Pancreas (tissue), 10 donors: ENCODE measurements at regions of chr6 and their contacts with region 1.

Region 1: DNA sequence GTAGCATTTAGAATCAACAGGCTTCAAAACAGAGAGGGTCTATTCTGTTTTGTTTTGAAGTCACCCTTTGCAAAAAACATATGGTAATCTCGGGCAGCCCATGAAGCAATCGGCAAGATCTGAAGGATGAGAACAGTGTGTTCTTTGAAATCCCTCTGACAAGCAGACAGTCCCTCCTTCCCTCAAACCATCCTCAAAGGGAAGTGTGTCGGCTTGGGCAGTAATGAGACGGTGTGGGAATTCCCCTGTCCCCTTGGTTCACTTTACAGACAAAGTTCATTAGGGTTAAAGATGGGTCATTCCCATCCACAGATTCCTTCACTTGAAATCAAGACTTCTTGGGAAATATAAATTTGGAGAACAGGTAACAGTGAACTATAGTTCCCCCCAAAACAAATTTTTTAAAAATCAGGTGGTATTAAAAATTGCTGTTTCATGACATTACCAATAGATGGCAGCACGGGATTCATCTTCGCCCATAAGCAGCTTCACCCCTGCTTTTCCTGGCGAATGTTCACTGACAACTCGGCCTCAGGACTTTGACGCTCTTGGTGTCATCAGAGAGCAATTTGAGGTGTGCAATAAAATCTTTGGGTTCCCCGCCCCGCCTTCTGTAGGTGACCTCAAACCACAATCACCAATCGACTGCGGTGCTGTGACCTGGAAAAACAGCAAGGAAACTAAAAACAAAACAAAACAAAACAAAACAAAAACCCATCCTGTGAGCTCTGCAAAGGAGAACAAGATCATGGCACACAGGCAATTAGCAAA is 159.3 kb upstream of the TNFAIP3 start:
- DNase-seq: peak in 3 of 6 donors; percentile 37 to 66 (median 38)
- ATAC-seq: peak in 3 of 4 donors; percentile 77 to 84 (median 83)
- H3K4me3 ChIP-seq: peak overlapping the region in 1 of 4 donors; percentile 13
- H3K27ac ChIP-seq: peak overlapping the region in 1 of 4 donors; percentile 13
- H3K4me1 ChIP-seq: peaks cover 0 to 5% (median 0%) of the 10 kb centered on the region in 3 donors
- H3K27me3 ChIP-seq: no peaks in the 10 kb centered on the region
- CTCF ChIP-seq: peak; percentile 24 to 64 (median 61)

Region 2: DNA sequence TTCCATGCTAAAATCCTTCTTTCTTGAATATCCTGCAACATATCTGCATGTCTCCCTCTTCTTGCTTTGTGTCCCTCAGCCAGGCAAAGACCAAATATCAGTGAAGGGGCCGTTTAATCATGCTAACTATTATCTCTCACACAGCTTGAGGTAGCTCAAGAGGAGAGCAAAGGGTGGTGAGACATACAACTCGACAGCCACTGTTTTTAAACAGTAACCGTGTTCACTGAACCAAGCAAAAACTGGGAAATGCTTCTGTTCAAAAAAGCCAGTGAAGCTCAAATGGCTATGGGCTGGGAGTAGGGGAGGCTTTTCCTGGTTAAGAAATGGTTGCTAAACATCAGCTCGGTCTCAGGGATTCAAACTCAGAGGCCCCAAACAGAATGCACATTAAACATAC is 1241.0 kb before region 1 on chr6:
- intact Hi-C with region 1: no loop called
- DNase-seq: no peak
- ATAC-seq: peak in 2 of 4 donors; percentile 48 to 60
- H3K4me3 ChIP-seq: no peak overlapping the region
- H3K27ac ChIP-seq: no peak overlapping the region
- H3K4me1 ChIP-seq: peaks cover 2 to 11% (median 10%) of the 10 kb centered on the region in 3 donors
- H3K27me3 ChIP-seq: no peaks in the 10 kb centered on the region
- CTCF ChIP-seq: no peak

Region 3: GRCh38 chr6:137866914-137867684 is 159.3 kb after region 1 on chr6 and contains the start of gene TNFAIP3:
- intact Hi-C with region 1: loop called in 1 of 3 experiments (anchors 5 kb)
- DNase-seq: peak; percentile 92 to 96 (median 94)
- ATAC-seq: peak; percentile 85 to 91 (median 88)
- H3K4me3 ChIP-seq: peak within 1 kb of the TSS; percentile 61 to 93 (median 88)
- H3K27ac ChIP-seq: peak within 1 kb of the TSS; percentile 90 to 97 (median 93)
- H3K4me1 ChIP-seq: peaks cover 0 to 17% (median 0%) of the 10 kb centered on the region in 3 donors
- H3K27me3 ChIP-seq: no peaks in the 10 kb centered on the region
- CTCF ChIP-seq: peak; percentile 70 to 87 (median 80)
- total RNA-seq, gene TNFAIP3: 9.3 to 59.2 (median 13.5) TPM

Region 4: DNA sequence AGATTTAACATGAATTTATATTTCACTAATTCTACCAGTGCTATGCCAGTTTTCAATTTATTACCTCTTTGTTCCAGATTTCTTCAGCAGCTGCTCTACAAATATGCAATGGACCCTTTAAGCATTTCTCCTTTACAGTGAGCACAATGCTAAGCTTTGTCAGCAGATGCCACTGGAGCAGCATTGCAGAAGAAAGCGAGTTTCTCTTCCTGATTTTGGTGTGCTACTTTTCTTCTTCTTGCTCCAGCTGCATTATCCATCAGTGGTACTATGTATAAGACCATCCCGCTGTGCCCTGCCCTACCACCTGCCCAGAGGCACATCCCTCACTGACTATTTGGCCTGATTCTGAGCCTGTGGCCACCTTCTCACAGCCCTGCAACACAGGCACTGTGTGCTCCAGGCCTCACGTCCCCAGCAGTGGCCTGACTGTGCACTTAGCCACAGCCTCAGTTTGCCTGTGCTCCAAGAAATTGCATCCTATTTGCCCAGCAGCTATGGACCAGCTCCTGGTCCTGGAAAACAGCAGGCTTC is 243.4 kb after region 1 on chr6:
- intact Hi-C with region 1: loop called in 1 of 3 experiments (anchors 5 kb)
- DNase-seq: no peak
- ATAC-seq: peak in 2 of 4 donors; percentile 38 to 53
- H3K4me3 ChIP-seq: no peak overlapping the region
- H3K27ac ChIP-seq: no peak overlapping the region
- H3K4me1 ChIP-seq: no peaks in the 10 kb centered on the region
- H3K27me3 ChIP-seq: no peaks in the 10 kb centered on the region
- CTCF ChIP-seq: no peak